Lower leg skin (tissue), 4 donors: ENCODE measurements at regions of chr12 and their contacts with region 1.

Region 1: DNA sequence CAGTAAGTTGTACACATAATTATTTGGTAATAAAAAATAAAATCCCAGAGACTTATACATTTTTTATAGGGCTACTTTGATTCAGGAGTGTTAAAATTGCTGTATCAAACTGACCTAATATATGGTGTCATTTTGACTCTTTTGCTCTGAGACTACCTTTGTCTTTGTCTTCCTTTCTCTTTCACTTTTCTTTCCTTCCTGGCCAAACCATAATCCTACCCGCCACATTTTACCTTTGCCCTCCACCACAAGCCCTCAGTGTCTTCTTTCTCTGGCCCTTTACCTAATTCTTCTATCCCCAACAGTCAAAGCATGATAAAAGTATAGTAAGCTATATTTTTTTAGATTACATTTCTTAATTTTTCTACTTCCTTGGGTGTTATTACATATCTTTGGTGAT is 62.0 kb downstream of the CAND1 start:
- DNase-seq: no peak
- H3K4me3 ChIP-seq: no peak overlapping the region
- CTCF ChIP-seq: no peak
- POLR2A ChIP-seq: no peak

Region 2: DNA sequence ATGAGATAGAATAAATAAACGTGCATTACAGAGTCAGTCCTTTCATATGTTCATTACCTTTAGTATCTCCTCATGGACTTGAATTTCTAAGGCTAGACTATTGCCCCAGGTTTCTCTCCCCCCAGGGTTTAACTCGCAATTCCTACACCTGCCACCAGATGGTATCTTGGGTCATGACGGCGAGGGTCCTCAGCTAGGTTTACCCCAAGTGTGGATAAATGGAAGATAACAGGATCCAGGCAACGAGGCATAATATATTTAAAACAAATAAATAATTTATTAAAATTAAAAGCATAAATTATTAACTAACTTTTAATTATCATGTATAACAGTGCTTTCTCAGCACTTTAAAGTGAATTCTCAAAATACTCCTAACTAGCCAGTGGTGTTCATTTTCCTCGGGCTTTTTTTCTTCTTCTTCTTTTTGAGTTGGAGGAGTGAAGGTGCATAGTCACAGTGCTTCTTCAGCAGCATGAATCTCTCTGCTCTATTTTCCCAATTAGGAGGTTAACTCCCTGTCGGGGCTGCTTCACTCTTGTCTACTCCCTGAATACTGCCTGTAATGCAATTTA is 305.5 kb before region 1 on chr12:
- intact Hi-C with region 1: no loop called
- DNase-seq: no peak
- H3K4me3 ChIP-seq: no peak overlapping the region
- CTCF ChIP-seq: no peak
- POLR2A ChIP-seq: no peak

Region 3: DNA sequence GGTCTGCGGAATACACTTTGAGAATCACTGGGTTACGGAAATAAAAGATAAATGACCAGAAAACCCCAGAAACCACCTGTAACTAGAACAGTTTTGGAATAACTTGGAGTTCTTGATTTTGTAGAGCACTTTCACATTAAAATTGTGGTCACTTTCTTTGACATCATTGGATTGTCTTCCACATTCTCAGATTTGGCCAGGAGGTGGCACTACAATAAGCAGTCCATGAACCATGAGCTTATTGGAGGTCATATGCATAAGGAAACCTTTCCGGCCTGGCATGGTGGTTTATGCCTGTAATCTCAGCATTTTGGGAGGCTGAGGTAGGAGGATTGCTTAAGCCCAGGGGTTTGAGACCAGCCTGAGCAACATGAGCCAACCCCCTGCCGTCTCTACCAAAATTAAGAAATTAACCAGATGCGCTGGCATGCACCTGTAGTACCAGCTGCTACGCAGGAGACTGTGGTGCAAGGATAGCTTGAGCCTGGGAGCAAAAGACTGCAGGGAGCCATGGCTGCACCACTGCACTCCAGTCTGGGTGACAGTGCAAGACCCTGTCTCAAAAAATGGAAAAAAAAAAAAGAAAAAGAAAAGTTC is 169.7 kb before region 1 on chr12:
- intact Hi-C with region 1: no loop called
- DNase-seq: no peak
- H3K4me3 ChIP-seq: no peak overlapping the region
- CTCF ChIP-seq: no peak
- POLR2A ChIP-seq: no peak

Region 4: GRCh38 chr12:68317047-68317667 is 986.0 kb after region 1 on chr12:
- intact Hi-C with region 1: loop called (anchors 10 kb)
- DNase-seq: no peak
- H3K4me3 ChIP-seq: no peak overlapping the region
- CTCF ChIP-seq: no peak
- POLR2A ChIP-seq: no peak